ENCODE measurements at regions of chr17 and their contacts with region 1.

Region 1: DNA sequence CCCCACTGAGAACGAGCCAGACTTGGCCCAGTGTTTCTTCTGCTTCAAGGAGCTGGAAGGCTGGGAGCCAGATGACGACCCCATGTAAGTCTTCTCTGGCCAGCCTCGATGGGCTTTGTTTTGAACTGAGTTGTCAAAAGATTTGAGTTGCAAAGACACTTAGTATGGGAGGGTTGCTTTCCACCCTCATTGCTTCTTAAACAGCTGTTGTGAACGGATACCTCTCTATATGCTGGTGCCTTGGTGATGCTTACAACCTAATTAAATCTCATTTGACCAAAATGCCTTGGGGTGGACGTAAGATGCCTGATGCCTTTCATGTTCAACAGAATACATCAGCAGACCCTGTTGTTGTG is 631 bp downstream of the BIRC5 start:
- DNase-seq: no peak
- ATAC-seq: peak; percentile 17
- H3K4me3 ChIP-seq: peak overlapping the region; percentile 100
- H3K27ac ChIP-seq: peak overlapping the region; percentile 72
- H3K4me1 ChIP-seq: peaks cover 13% of the 10 kb centered on the region
- H3K27me3 ChIP-seq: no peaks in the 10 kb centered on the region
- CTCF ChIP-seq: no peak

Region 2: DNA sequence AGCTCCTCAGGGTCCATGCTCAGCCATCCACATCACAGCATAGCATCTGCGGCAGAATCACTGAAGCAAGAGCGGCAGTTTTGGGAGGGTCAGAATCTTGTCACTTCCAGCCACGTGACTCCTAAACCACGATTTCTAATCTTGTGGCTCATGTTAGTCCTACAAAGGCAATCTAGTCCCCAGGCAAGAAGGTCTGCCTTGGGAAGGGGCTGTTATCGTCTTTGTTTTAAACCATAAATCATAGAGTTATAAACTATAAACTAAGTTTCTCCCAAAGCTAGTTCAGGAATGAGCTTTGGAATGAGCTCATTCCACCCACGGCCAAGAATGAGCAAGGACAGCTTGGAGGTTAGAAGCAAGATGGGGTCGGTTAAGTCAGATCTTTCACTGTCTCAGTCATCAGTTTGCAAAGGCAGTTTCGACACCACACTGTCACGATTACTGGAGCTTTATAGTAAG is 383.4 kb after region 1 on chr17:
- CTCF ChIA-PET with region 1: no interaction called
- POLR2A ChIA-PET with region 1: interaction called, 15 read pairs
- intact Hi-C with region 1: no loop called
- DNase-seq: no peak
- ATAC-seq: no peak
- H3K4me3 ChIP-seq: no peak overlapping the region
- H3K27ac ChIP-seq: no peak overlapping the region
- H3K4me1 ChIP-seq: peaks cover 5% of the 10 kb centered on the region
- H3K27me3 ChIP-seq: no peaks in the 10 kb centered on the region
- CTCF ChIP-seq: no peak

Measured in PC-3 (cell line).